Activated CD8-positive, alpha-beta memory T cell treated with anti-CD3 and anti-CD28 coated beads, Interleukin-2, amount 10 ng/mL, durations not matched to agents 7 days and 5 days (primary cell): ENCODE measurements at regions of chr7 and their contacts with region 1.

Region 1: DNA sequence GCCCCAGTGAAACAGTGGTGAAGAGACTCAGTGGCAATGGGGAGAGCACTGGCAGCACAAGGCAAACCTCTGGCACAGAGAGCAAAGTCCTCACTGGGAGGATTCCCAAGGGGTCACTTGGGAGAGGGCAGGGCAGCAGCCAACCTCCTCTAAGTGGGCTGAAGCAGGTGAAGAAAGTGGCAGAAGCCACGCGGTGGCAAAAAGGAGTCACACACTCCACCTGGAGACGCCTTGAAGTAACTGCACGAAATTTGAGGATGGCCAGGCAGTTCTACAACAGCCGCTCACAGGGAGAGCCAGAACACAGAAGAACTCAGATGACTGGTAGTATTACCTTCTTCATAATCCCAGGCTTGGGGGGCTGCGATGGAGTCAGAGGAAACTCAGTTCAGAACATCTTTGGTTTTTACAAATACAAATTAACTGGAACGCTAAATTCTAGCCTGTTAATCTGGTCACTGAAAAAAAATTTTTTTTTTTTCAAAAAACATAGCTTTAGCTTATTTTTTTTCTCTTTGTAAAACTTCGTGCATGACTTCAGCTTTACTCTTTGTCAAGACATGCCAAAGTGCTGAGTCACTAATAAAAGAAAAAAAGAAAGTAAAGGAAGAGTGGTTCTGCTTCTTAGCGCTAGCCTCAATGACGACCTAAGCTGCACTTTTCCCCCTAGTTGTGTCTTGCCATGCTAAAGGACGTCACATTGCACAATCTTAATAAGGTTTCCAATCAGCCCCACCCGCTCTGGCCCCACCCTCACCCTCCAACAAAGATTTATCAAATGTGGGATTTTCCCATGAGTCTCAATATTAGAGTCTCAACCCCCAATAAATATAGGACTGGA is 435 bp upstream of the IL6 start:
- DNase-seq: peak; percentile 74
- ATAC-seq: peak; percentile 92
- H3K4me3 Mint-ChIP-seq: no peak overlapping the region
- H3K27ac Mint-ChIP-seq: no peak overlapping the region
- H3K4me1 Mint-ChIP-seq: peaks cover 30% of the 10 kb centered on the region
- H3K27me3 Mint-ChIP-seq: peaks cover 67% of the 10 kb centered on the region

Region 2: GRCh38 chr7:22559829-22560489 is 166.6 kb before region 1 on chr7:
- CTCF ChIA-PET with region 1: interaction called, 376 read pairs
- DNase-seq: peak; percentile 79
- ATAC-seq: peak; percentile 72
- H3K4me3 Mint-ChIP-seq: no peak overlapping the region
- H3K27ac Mint-ChIP-seq: no peak overlapping the region
- H3K4me1 Mint-ChIP-seq: peaks cover 36% of the 10 kb centered on the region
- H3K27me3 Mint-ChIP-seq: peaks cover 38% of the 10 kb centered on the region

Region 3: DNA sequence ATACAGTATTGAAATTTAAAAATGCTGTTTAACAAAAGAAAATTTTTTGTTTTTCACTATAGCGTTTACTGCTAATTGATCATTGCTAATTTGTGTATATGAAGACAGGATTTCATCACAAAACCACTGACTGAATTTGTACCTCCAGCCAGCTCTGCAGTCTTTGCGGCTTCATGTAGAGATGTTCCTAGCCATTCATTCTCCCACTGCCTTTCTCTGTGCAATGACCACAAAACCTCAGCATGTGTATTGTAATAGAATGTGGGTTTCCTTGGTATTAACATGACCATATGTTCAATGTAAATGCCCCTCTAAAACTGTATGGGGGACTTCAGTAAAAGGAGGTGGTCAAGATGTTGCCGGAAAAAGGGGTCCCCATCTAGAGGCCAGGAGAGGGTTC is 145.5 kb before region 1 on chr7:
- CTCF ChIA-PET with region 1: interaction called, 12 read pairs
- DNase-seq: peak; percentile 46
- ATAC-seq: no peak
- H3K4me3 Mint-ChIP-seq: no peak overlapping the region
- H3K27ac Mint-ChIP-seq: no peak overlapping the region
- H3K4me1 Mint-ChIP-seq: peaks cover 5% of the 10 kb centered on the region
- H3K27me3 Mint-ChIP-seq: peaks cover 67% of the 10 kb centered on the region

Region 4: DNA sequence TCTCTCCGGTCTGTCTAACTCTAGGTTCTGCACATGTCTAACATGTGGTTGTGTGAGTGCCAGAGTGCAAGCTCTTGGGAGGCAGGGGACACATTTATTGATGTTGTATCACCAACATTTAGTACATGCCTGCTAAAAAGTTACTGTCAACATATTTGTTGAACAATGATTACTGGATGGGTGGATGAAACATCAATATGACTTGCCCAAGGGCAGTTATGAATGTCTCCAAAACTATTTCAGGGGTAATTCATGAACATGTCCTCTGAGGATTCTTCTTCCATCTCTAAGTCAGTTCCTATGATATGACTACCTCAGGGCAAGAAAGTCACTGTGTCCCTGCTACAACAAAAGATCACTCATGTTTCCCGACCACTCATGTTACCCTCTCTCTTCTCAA is 135.3 kb before region 1 on chr7:
- CTCF ChIA-PET with region 1: no interaction called
- DNase-seq: no peak
- ATAC-seq: no peak
- H3K4me3 Mint-ChIP-seq: no peak overlapping the region
- H3K27ac Mint-ChIP-seq: no peak overlapping the region
- H3K4me1 Mint-ChIP-seq: peaks cover 6% of the 10 kb centered on the region
- H3K27me3 Mint-ChIP-seq: peaks cover 70% of the 10 kb centered on the region

Region 5: GRCh38 chr7:22632674-22633073 is 93.9 kb before region 1 on chr7:
- CTCF ChIA-PET with region 1: no interaction called
- DNase-seq: no peak
- ATAC-seq: no peak
- H3K4me3 Mint-ChIP-seq: no peak overlapping the region
- H3K27ac Mint-ChIP-seq: no peak overlapping the region
- H3K4me1 Mint-ChIP-seq: no peaks in the 10 kb centered on the region
- H3K27me3 Mint-ChIP-seq: peaks cover 78% of the 10 kb centered on the region

Region 6: GRCh38 chr7:22697876-22698606 is 28.5 kb before region 1 on chr7:
- CTCF ChIA-PET with region 1: interaction called, 24 read pairs
- DNase-seq: peak; percentile 53
- ATAC-seq: peak; percentile 77
- H3K4me3 Mint-ChIP-seq: peak overlapping the region; percentile 6
- H3K27ac Mint-ChIP-seq: peak overlapping the region; percentile 85
- H3K4me1 Mint-ChIP-seq: peaks cover 67% of the 10 kb centered on the region
- H3K27me3 Mint-ChIP-seq: peaks cover 41% of the 10 kb centered on the region

Region 7: DNA sequence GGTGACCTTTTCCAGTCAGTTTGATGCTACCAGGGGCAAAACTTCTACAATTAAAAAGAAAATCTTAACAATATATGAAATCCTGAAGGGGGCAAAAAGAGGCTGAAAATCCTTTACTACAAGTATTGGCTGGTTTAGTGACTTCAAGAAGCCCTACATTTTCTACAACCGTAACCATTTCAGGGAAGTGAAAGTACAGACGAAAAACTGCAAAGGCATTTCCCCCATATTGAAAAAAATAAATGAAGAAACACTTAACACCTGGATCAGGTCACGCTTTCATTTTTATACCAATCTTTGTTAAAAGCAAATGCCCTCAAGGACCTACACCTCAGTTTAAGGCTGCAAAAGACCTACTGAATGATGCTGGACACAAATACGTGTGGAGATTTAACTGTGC is 39.0 kb after region 1 on chr7:
- CTCF ChIA-PET with region 1: no interaction called
- DNase-seq: no peak
- ATAC-seq: no peak
- H3K4me3 Mint-ChIP-seq: no peak overlapping the region
- H3K27ac Mint-ChIP-seq: no peak overlapping the region
- H3K4me1 Mint-ChIP-seq: no peaks in the 10 kb centered on the region
- H3K27me3 Mint-ChIP-seq: peaks cover 69% of the 10 kb centered on the region

Region 8: GRCh38 chr7:22944022-22944421 is 217.5 kb after region 1 on chr7:
- CTCF ChIA-PET with region 1: no interaction called
- DNase-seq: no peak
- ATAC-seq: no peak
- H3K4me3 Mint-ChIP-seq: no peak overlapping the region
- H3K27ac Mint-ChIP-seq: no peak overlapping the region
- H3K4me1 Mint-ChIP-seq: no peaks in the 10 kb centered on the region
- H3K27me3 Mint-ChIP-seq: no peaks in the 10 kb centered on the region